Right cardiac atrium (tissue), 5 donors: ENCODE measurements at regions of chr16 and their contacts with region 1.

Region 1: GRCh38 chr16:67561824-67562525 is 351 bp upstream of the CTCF start:
- DNase-seq: peak; percentile 97 to 99 (median 99)
- ATAC-seq: peak; percentile 96
- H3K4me3 ChIP-seq: peak overlapping the region; percentile 79
- H3K27ac ChIP-seq: peak overlapping the region; percentile 90
- H3K4me1 ChIP-seq: peaks cover 2% of the 10 kb centered on the region
- H3K27me3 ChIP-seq: no peaks in the 10 kb centered on the region

Region 2: DNA sequence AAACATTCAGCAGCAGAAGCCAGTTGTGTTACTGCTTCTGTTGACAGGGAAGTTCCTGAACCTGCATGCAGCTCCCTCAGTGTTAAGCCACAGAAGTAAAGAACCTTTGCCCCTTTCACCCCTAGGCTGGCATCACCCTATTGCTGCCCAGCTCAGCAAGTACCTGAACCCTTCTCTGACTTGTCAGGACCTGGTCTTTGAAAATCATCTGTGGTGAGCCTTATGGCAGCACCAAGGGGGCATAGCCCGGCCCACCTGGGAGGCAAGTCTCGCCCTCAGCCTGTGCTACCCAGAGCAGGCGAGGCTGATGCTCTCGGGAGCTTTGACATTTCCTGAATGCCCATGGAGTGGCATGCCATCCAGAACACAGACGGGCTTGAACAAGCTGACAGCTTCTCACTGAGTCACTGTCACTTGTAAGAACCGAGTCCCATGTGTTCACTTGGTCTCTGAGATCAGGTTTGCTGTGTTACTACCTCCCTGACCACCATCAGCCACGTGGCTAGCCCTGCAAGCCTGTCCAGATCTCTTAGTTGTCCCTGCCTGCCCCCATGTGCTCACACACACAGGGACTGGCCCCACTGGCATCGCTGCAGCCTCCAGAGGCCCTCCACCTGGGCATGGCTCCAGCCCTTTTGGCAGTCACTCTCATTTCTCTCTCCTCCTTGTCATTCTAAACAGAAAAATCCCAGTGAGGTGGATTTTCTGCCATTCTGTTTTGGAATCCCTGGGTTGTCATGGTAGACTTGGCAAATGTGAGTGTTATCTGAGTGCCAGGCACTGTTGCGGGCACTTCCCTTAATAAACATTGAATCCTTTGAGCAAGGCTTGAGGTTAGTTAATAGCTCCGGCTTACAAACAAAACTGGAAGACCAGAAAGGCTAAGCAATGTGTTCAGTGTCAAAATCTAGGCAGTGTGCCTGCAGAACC is 80.1 kb after region 1 on chr16:
- intact Hi-C with region 1: loop called in 1 of 4 experiments (anchors 10 kb)
- DNase-seq: peak; percentile 72 to 89 (median 85)
- ATAC-seq: peak; percentile 69 to 84
- H3K4me3 ChIP-seq: no peak overlapping the region
- H3K27ac ChIP-seq: no peak overlapping the region
- H3K4me1 ChIP-seq: no peaks in the 10 kb centered on the region
- H3K27me3 ChIP-seq: no peaks in the 10 kb centered on the region

Region 3: GRCh38 chr16:67667817-67668494 is 106.0 kb after region 1 on chr16:
- intact Hi-C with region 1: loop called in 3 of 4 experiments (anchors 10 kb)
- DNase-seq: peak; percentile 88 to 95 (median 94)
- ATAC-seq: peak; percentile 83 to 86
- H3K4me3 ChIP-seq: no peak overlapping the region
- H3K27ac ChIP-seq: peak overlapping the region; percentile 75
- H3K4me1 ChIP-seq: peaks cover 5% of the 10 kb centered on the region
- H3K27me3 ChIP-seq: no peaks in the 10 kb centered on the region